HCT116 (cell line): ENCODE measurements at regions of chr3 and their contacts with region 1.

Region 1: DNA sequence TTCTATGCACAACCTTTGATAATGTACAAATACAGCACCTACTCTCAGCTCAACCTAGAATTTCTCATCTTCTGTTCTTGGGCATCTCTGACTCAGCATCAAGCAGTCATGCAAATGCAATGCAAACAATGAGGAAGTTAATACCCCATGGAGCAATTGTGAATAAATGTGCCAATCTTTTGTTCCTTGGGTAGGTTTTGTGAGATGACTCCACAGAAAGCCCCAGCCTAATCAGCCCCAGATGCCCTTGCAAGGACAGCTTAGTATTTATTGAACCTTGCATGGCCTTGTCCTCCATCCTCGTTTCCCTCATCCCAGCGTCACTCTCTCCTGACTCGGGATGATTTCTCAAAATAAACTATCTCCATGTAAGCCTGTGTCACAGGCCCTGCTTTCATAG is 494.7 kb upstream of the NECTIN3 start:
- DNase-seq: peak; percentile 80
- ATAC-seq: peak; percentile 75
- H3K4me3 ChIP-seq: peak overlapping the region in 1 of 2 experiments; percentile 16; a peak in 1 of 4 replicates
- H3K27ac ChIP-seq: peak overlapping the region; percentile 90
- H3K4me1 ChIP-seq: peaks cover 58 to 71% of the 10 kb centered on the region in 2 experiments
- H3K27me3 ChIP-seq: no peaks in the 10 kb centered on the region
- CTCF ChIP-seq: no peak
- POLR2A ChIP-seq: no peak
- RAD21 ChIP-seq: peak; percentile 30

Region 2: GRCh38 chr3:109927161-109927560 is 649.8 kb before region 1 on chr3:
- CTCF ChIA-PET with region 1: no interaction called
- POLR2A ChIA-PET with region 1: no interaction called
- RAD21 ChIA-PET with region 1: no interaction called
- intact Hi-C with region 1: loop called (anchors 10 kb)
- DNase-seq: peak; percentile 98
- ATAC-seq: peak; percentile 83
- H3K4me3 ChIP-seq: peak overlapping the region in 1 of 2 experiments; percentile 44; a peak in 1 of 4 replicates
- H3K27ac ChIP-seq: peak overlapping the region; percentile 88
- H3K4me1 ChIP-seq: peaks cover 37 to 82% of the 10 kb centered on the region in 2 experiments
- H3K27me3 ChIP-seq: no peaks in the 10 kb centered on the region
- CTCF ChIP-seq: no peak
- POLR2A ChIP-seq: no peak
- RAD21 ChIP-seq: peak; percentile 35